Ascending aorta (tissue), 2 donors: ENCODE measurements at regions of chr4 and their contacts with region 1.

Region 1: DNA sequence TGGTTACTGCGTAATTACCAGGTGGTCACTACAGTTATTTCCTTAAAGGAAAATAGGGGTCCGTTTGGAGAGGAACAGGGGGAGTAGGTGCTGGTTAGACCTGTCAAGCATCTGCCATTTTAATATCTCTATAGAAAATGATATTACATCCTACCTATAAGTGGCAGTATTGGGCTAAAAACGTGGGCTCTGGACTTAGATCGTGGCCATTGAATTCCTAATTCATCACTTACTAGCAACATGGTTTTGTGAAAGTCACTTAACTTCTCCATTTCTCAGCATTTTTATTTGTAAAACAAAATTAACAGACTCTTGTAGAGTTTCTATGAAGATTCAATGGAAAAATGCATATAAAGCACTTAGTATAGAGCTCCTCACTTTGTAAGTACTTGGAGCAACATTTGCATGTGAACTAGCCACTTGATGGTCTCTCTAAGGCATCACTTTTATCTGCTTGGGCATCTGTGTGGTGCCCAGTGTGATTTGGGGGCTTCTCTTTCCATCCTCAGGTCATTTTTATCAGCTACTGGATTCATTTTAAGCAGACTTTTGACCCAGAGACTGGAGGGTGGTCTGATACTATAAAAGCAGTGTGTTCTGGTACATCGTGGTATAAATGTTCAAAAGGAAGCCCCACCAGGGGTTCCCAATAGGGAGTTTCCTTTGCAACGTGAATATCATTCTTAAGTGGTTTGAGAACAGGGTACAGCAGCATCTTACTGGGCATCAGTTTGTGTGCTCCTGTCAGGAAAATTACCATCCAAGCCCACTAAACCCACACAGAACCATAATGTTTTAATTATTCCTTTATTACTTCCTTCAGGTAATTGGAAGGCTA is 42.7 kb upstream of the RASSF6 start:
- DNase-seq: no peak
- H3K4me3 ChIP-seq: no peak overlapping the region
- H3K27ac ChIP-seq: no peak overlapping the region
- H3K4me1 ChIP-seq: no peaks in the 10 kb centered on the region
- H3K27me3 ChIP-seq: no peaks in the 10 kb centered on the region
- CTCF ChIP-seq: peak; percentile 34 to 54 (median 49)

Region 2: GRCh38 chr4:73544620-73545019 is 118.3 kb before region 1 on chr4:
- intact Hi-C with region 1: no loop called
- DNase-seq: no peak
- H3K4me3 ChIP-seq: no peak overlapping the region
- H3K27ac ChIP-seq: no peak overlapping the region
- H3K4me1 ChIP-seq: no peaks in the 10 kb centered on the region
- H3K27me3 ChIP-seq: no peaks in the 10 kb centered on the region
- CTCF ChIP-seq: no peak

Region 3: DNA sequence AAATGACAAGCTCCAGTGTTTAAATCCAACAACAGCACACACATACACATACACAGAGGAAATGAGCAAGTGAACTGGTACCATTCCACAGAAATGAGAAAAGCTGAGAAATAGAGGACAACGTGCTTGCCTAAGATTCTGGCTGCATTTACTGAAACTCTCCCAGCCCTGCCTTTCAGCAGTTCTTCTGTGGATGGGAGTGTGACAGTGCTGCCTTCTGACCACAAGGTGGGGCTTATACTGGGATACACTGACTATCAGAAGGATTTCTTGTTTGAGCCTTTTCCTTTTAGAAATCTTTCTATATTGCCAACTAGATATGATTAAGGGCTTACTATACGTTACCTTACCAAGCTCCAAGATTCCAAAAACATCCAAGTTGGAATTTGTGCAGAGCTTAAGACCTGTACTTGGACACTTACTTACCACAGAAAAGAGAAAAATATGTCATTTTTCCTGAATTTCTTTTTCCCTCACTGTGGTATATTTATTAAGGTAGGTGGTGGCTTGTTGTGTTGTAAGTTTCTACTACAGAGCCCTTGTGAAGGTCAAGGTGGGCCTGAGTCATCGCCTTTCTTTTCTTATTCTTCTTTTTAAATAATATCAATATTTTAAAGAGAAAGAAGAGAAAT is 66.7 kb after region 1 on chr4:
- intact Hi-C with region 1: loop called (anchors 5 kb)
- DNase-seq: peak in 1 of 2 donors; percentile 87
- H3K4me3 ChIP-seq: no peak overlapping the region
- H3K27ac ChIP-seq: no peak overlapping the region
- H3K4me1 ChIP-seq: no peaks in the 10 kb centered on the region
- H3K27me3 ChIP-seq: no peaks in the 10 kb centered on the region
- CTCF ChIP-seq: peak; percentile 58 to 77 (median 74)

Region 4: DNA sequence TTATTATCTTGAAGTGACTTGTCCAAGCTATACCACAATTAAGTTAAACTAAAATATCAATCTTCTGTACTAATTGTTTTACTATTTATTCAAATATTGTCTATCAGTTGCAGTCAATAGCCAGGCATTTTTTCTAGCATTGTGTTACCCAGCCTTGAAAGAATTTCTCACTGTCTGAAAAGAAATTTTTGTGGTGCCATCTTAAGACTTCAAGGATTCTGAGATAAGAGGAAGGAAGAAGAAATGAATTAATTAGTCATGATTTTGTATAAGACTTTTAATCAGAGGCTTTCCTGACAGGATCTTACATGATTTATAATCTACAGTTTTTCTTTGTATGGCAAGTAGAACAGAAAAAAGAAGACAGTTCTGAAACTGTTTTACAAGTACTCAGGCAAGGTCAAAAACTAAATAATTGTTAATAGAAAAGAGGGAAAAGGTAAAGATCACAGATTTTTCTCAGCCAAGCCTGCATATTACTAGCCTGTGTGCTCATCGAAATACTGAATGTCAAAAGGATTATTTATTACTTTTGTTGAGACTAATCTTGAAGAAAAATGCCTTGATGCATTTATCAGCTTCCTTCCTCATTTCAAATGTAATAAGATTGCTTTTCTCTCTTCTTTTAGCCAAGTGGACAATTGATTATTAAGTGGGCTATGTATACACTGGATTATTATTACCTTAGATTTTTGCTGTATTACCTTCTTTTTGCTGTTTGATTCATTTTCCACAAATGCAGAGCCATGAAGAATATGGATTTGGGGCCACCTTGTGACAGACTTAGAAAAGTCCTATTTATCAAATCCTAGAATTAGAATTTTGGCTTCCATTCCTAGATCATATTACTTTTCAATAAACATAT is 260.1 kb after region 1 on chr4:
- intact Hi-C with region 1: loop called (anchors 2 kb)
- DNase-seq: no peak
- H3K4me3 ChIP-seq: no peak overlapping the region
- H3K27ac ChIP-seq: no peak overlapping the region
- H3K4me1 ChIP-seq: no peaks in the 10 kb centered on the region
- H3K27me3 ChIP-seq: no peaks in the 10 kb centered on the region
- CTCF ChIP-seq: peak in 2 of 3 experiments; percentile 27 to 32

Region 5: GRCh38 chr4:74038161-74039064 is 375.5 kb after region 1 on chr4 and contains the start of gene CXCL3:
- intact Hi-C with region 1: loop called (anchors 5 kb)
- DNase-seq: peak in 1 of 2 donors; percentile 86
- H3K4me3 ChIP-seq: peak within 1 kb of the TSS; percentile 78 to 83
- H3K27ac ChIP-seq: peak within 1 kb of the TSS; percentile 22 to 46
- H3K4me1 ChIP-seq: peaks cover 0 to 3% of the 10 kb centered on the region in 2 donors
- H3K27me3 ChIP-seq: no peaks in the 10 kb centered on the region
- CTCF ChIP-seq: peak; percentile 18 to 41 (median 38)
- total RNA-seq, gene CXCL3: not detected